GM12878 (cell line): ENCODE measurements at regions of chr11 and their contacts with region 1.

Region 1: GRCh38 chr11:119912229-119912628 is 183.2 kb upstream of the NECTIN1 start:
- DNase-seq: no peak
- ATAC-seq: no peak
- H3K4me3 ChIP-seq: no peak overlapping the region
- H3K27ac ChIP-seq: no peak overlapping the region
- H3K4me1 ChIP-seq: no peaks in the 10 kb centered on the region
- H3K27me3 ChIP-seq: no peaks in the 10 kb centered on the region; a peak in 3 of 4 replicates
- CTCF ChIP-seq: no peak
- EP300 ChIP-seq: no peak
- POLR2A ChIP-seq: no peak
- RAD21 ChIP-seq: no peak

Region 2: GRCh38 chr11:119684361-119685110 is 227.7 kb before region 1 on chr11:
- CTCF ChIA-PET with region 1: no interaction called
- POLR2A ChIA-PET with region 1: no interaction called
- RAD21 ChIA-PET with region 1: no interaction called
- SMC1A ChIA-PET with region 1: no interaction called
- in situ Hi-C with region 1: no loop called
- intact Hi-C with region 1: no loop called
- DNase-seq: no peak
- ATAC-seq: no peak
- H3K4me3 ChIP-seq: no peak overlapping the region
- H3K27ac ChIP-seq: no peak overlapping the region
- H3K4me1 ChIP-seq: peaks cover 5% of the 10 kb centered on the region
- H3K27me3 ChIP-seq: no peaks in the 10 kb centered on the region
- CTCF ChIP-seq: no peak
- EP300 ChIP-seq: no peak
- POLR2A ChIP-seq: no peak
- RAD21 ChIP-seq: no peak

Region 3: GRCh38 chr11:119854521-119854920 is 57.7 kb before region 1 on chr11:
- CTCF ChIA-PET with region 1: no interaction called
- POLR2A ChIA-PET with region 1: no interaction called
- RAD21 ChIA-PET with region 1: no interaction called
- SMC1A ChIA-PET with region 1: no interaction called
- in situ Hi-C with region 1: no loop called
- intact Hi-C with region 1: loop called (anchors 10 kb)
- DNase-seq: no peak
- ATAC-seq: no peak
- H3K4me3 ChIP-seq: no peak overlapping the region
- H3K27ac ChIP-seq: no peak overlapping the region
- H3K4me1 ChIP-seq: no peaks in the 10 kb centered on the region
- H3K27me3 ChIP-seq: peaks cover 2 to 6% of the 10 kb centered on the region in 2 experiments; a peak in 3 of 4 replicates
- CTCF ChIP-seq: no peak
- EP300 ChIP-seq: no peak
- POLR2A ChIP-seq: no peak
- RAD21 ChIP-seq: no peak

Region 4: DNA sequence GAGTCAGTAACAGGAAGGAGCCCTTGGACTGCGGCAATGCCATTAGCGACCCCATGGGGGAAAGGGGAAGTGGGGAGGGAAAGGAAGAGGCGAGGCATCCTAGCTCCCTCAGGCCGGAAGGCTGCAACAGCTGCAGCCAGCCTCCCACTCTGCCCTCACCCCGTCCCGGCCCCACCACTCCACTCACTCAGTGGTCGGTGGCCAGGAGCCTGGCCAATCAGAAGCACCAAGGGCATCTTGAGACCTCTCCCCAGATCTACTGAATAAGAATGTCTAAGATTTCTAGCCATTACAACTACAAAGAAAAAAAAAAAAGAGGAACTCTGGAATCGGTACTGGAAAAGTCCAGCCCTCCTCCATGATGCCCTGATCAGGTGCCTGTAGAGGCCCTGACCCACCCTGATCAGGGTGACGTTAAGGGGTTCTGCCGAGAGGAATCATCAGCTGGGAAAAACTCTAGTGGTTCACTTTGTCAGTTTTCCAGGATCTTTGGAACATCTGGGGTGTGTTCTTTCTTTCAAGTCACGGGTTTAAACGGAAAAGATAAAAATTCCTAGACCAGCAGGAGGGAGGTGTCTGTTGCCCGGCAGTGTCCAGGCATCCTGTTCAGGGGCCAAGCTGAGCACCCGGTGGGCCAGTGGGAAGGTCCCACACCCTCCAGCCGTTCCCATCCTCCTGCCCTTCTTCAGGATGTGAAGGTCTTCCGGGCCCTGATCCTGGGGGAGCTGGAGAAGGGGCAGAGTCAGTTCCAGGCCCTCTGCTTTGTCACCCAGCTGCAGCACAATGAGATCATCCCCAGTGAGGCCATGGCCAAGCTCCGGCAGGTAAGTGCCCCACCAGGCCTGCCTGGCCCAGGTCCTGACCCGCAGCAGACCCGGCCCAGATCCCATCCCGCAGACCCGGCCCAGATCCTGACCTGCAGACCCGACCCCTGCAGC is 313.0 kb after region 1 on chr11:
- CTCF ChIA-PET with region 1: no interaction called
- POLR2A ChIA-PET with region 1: no interaction called
- RAD21 ChIA-PET with region 1: no interaction called
- SMC1A ChIA-PET with region 1: no interaction called
- in situ Hi-C with region 1: no loop called
- intact Hi-C with region 1: no loop called
- DNase-seq: no peak
- ATAC-seq: peak; percentile 50
- H3K4me3 ChIP-seq: no peak overlapping the region
- H3K27ac ChIP-seq: no peak overlapping the region
- H3K4me1 ChIP-seq: peaks cover 8% of the 10 kb centered on the region
- H3K27me3 ChIP-seq: no peaks in the 10 kb centered on the region
- CTCF ChIP-seq: no peak
- EP300 ChIP-seq: no peak
- POLR2A ChIP-seq: no peak
- RAD21 ChIP-seq: no peak